ENCODE measurements at regions of chr2 and their contacts with region 1.

Region 1: GRCh38 chr2:105294844-105295481 is 34.6 kb downstream of the TGFBRAP1 start:
- DNase-seq: peak; percentile 62
- ATAC-seq: peak; percentile 71
- H3K4me3 Mint-ChIP-seq: no peak overlapping the region
- H3K27ac Mint-ChIP-seq: no peak overlapping the region
- H3K4me1 Mint-ChIP-seq: no peaks in the 10 kb centered on the region
- H3K27me3 Mint-ChIP-seq: no peaks in the 10 kb centered on the region

Region 2: GRCh38 chr2:105329561-105330495 is 34.9 kb after region 1 on chr2 and contains the start of gene TGFBRAP1:
- CTCF ChIA-PET with region 1: interaction called, 13 read pairs
- POLR2A ChIA-PET with region 1: no interaction called
- DNase-seq: peak; percentile 58
- ATAC-seq: peak; percentile 93
- H3K4me3 Mint-ChIP-seq: peak within 1 kb of the TSS; percentile 85
- H3K27ac Mint-ChIP-seq: peak within 1 kb of the TSS; percentile 91
- H3K4me1 Mint-ChIP-seq: peaks cover 35% of the 10 kb centered on the region
- H3K27me3 Mint-ChIP-seq: no peaks in the 10 kb centered on the region
- total RNA-seq, gene TGFBRAP1: 16.4 to 16.6 TPM

Region 3: DNA sequence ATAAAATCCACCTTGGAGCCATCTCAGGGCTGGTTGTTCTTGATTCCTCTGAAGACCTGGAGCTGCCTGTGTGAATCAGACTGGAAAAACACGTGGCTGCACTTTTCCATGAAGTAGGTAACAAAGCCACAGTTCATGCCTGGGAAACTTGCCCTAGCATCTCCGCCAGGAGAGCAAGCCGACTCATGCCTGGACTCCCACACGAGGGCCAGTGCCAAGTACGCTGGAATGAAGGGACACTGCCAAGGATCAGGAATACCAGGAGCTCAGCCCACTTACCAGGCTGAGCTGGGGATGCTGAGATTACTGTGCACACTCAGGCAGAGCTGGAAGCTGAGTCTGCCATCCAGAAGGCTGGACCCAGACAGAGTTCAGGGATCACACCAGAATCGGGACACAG is 114.8 kb after region 1 on chr2:
- CTCF ChIA-PET with region 1: no interaction called
- POLR2A ChIA-PET with region 1: no interaction called
- DNase-seq: no peak
- ATAC-seq: no peak
- H3K4me3 Mint-ChIP-seq: no peak overlapping the region
- H3K27ac Mint-ChIP-seq: no peak overlapping the region
- H3K4me1 Mint-ChIP-seq: peaks cover 2% of the 10 kb centered on the region
- H3K27me3 Mint-ChIP-seq: peaks cover 33% of the 10 kb centered on the region

Measured in activated CD8-positive, alpha-beta T cell treated with anti-CD3 and anti-CD28 coated beads, Interleukin-2, amount 10 ng/mL, durations not matched to agents 7 days and 5 days (primary cell).